ENCODE measurements at regions of chr21 and their contacts with region 1.

Region 1: GRCh38 chr21:24824209-24824608 is 783.1 kb downstream of the MRPL39 start:
- DNase-seq: no peak
- ATAC-seq: no peak

Region 2: DNA sequence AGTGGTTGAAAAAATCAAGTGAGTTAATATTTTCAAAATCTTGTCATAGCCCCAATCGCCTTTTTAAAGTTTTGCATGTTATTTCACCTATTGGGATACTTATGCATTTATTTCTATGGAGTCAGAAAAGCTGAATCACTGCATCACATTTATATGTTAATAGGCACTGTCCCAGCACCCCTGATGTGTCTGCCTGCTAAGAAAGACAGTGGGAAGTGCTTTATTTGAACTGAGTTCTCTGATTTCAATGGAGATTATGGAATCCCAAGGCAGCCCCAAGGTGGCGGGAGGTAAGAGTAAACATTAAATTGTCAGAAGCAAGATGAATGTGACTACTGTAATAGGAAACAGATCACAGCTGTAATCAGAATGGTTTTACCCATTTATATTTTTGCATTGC is 1600.3 kb before region 1 on chr21:
- intact Hi-C with region 1: loop called (anchors 10 kb)
- DNase-seq: no peak
- ATAC-seq: no peak

Region 3: GRCh38 chr21:24671901-24672300 is 152.3 kb before region 1 on chr21:
- intact Hi-C with region 1: no loop called
- DNase-seq: no peak
- ATAC-seq: no peak